Cardiac septum (tissue), 1 donor: ENCODE measurements at regions of chr10 and their contacts with region 1.

Region 1: GRCh38 chr10:13160934-13161856 is at the start of gene MCM10:
- DNase-seq: peak; percentile 97
- total RNA-seq, gene MCM10: 0.22 TPM

Region 2: GRCh38 chr10:13146383-13146782 is 14.8 kb before region 1 on chr10:
- intact Hi-C with region 1: no loop called
- DNase-seq: no peak

Region 3: GRCh38 chr10:13299437-13300287 is 138.5 kb after region 1 on chr10 and contains the start of gene PHYH:
- intact Hi-C with region 1: loop called (anchors 5 kb)
- DNase-seq: peak; percentile 95
- total RNA-seq, gene PHYH: 101 TPM

Region 4: DNA sequence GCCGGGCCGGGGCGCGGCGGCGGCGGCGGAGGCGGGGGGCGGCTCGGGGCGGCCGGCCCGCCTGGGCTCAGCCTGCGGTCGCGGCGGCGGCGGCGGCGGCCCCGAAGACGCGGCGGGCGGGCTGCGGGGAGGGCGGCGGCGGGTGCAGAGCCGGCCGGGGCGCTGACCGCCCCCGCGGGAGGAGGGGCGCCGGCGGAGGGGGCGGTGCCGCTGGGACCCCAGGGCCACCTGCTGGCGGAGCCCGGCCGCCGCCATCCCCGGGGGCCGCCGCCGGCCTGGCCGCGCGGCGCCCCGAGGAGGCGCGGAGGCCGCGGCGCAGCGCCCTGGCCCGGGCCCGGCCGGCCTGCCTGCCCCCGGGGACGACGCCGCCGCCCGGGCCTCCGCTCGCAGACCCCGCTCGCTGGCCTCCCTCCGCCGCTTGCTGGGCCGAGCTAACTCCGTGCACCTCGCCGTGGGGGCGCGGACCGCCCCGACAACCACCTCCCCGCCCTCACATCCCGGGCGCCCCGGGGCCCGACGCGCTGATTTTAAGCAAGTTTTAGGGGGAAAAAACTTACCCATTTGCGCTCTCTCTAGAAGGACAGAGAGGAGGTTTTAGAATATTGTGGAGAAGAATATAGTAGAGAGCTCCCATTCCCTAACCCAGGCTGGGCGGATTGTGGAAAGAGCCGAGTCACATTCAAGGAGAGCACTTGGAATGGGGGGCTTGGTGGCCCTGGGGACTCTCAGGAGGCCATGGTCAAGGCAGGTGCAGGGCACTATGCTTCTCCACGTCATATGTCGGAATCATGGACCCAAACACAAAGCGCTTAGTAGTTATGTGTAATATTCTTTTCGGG is 367.9 kb after region 1 on chr10 and contains the start of gene BEND7:
- intact Hi-C with region 1: loop called (anchors 10 kb)
- DNase-seq: no peak
- total RNA-seq, gene BEND7: 14.0 TPM